ENCODE measurements at regions of chr15 and their contacts with region 1.

Region 1: GRCh38 chr15:60362321-60363086 is 35.3 kb downstream of the ANXA2 start:
- DNase-seq: peak; percentile 52
- H3K4me3 Mint-ChIP-seq: peak overlapping the region; percentile 18
- H3K27ac Mint-ChIP-seq: peak overlapping the region; percentile 75
- H3K4me1 Mint-ChIP-seq: peaks cover 28% of the 10 kb centered on the region
- H3K27me3 Mint-ChIP-seq: no peaks in the 10 kb centered on the region

Region 2: GRCh38 chr15:60389261-60390077 is 27.0 kb after region 1 on chr15:
- intact Hi-C with region 1: loop called (anchors 2 kb)
- DNase-seq: peak; percentile 62
- H3K4me3 Mint-ChIP-seq: peak overlapping the region; percentile 26
- H3K27ac Mint-ChIP-seq: peak overlapping the region; percentile 75
- H3K4me1 Mint-ChIP-seq: peaks cover 63% of the 10 kb centered on the region
- H3K27me3 Mint-ChIP-seq: no peaks in the 10 kb centered on the region

Region 3: GRCh38 chr15:60444289-60444912 is 81.9 kb after region 1 on chr15:
- intact Hi-C with region 1: loop called (anchors 2 kb)
- DNase-seq: no peak
- H3K4me3 Mint-ChIP-seq: no peak overlapping the region
- H3K27ac Mint-ChIP-seq: no peak overlapping the region
- H3K4me1 Mint-ChIP-seq: peaks cover 2% of the 10 kb centered on the region
- H3K27me3 Mint-ChIP-seq: no peaks in the 10 kb centered on the region

Region 4: DNA sequence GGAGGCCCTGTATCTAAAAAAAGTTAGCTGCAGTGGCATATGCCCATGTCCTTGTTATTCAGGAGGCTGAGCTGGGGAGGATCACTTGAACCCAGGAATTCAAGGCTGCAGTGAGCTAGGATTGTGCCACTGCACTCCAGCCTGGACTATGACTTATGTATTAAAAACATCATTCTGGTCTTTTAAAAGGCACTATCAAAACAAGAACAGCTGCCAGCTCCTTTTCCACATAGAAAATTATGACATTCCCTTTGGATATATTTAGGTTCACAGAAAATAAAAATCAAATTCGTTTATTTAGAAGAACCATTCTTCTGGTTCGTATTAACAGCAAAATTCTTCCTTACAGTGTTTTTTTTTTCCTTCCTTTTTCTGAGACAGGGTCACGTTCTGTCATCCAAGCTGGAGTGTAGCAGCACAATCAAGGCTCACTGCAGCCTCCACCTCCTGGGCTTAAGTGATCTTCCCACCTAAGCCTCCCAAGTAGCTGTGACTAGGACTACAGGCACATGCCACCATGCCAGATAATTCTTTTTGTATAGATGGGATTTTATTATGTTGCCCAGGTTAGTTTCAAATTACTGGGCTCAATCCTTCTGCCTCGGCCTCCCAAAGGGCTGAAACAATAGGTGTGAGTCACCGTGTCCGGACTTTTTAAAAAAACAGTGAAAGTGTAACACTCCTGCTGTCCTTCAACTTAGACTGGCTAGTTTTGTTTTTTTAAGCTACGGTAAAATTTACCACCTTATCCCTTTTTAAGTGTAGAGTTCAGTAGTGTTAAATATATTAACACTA is 102.5 kb after region 1 on chr15:
- intact Hi-C with region 1: no loop called
- DNase-seq: no peak
- H3K4me3 Mint-ChIP-seq: no peak overlapping the region
- H3K27ac Mint-ChIP-seq: no peak overlapping the region
- H3K4me1 Mint-ChIP-seq: peaks cover 10% of the 10 kb centered on the region
- H3K27me3 Mint-ChIP-seq: no peaks in the 10 kb centered on the region

Region 5: DNA sequence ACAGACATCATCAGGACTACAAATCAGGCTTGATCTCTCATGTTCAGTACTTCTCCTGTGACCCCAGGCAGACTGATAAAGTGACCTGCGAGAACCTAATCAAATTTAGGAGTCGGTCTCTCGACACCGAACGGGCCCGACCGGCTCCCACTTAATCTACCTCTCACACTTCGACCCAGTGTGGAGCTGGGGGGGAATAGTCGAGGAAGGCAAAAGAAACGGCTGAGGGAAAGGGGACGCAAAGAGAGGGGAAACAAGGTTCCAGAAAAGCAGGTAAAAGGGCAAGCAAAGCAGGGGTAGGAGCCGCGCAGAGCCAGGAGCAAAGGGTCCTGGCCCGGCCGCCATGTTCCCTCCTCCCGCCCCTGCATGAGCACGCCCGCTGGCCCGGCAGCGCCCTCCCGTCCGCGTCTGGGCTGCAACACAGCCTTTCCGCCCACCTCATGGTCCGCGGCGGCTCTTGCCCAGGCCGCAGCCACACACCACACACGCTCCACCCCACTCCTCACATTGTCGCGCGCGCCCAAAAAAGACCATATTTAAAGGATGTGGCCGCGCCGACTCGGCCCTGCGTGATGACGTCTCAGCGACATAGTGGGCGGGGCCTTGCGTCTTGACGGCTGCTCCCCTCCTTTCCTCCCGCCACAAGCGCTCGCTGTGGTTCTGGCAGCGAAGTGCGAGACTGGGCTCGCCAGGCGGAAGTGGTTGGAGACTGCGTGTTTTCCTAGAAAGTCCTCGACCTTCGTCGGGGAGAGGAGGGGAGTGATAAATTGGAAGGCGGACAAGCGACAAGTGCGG is 116.3 kb after region 1 on chr15 and contains the start of gene ICE2:
- intact Hi-C with region 1: loop called (anchors 2 kb)
- DNase-seq: peak; percentile 94
- H3K4me3 Mint-ChIP-seq: peak within 1 kb of the TSS; percentile 97
- H3K27ac Mint-ChIP-seq: peak within 1 kb of the TSS; percentile 99
- H3K4me1 Mint-ChIP-seq: peaks cover 42% of the 10 kb centered on the region
- H3K27me3 Mint-ChIP-seq: no peaks in the 10 kb centered on the region
- total RNA-seq, gene ICE2: 48.0 and 50.4 TPM in 2 replicates

Region 6: GRCh38 chr15:60916679-60917460 is 554.4 kb after region 1 on chr15:
- intact Hi-C with region 1: loop called (anchors 10 kb)
- DNase-seq: peak; percentile 69
- H3K4me3 Mint-ChIP-seq: no peak overlapping the region
- H3K27ac Mint-ChIP-seq: no peak overlapping the region
- H3K4me1 Mint-ChIP-seq: peaks cover 16% of the 10 kb centered on the region
- H3K27me3 Mint-ChIP-seq: peaks cover 27% of the 10 kb centered on the region